Posterior cingulate gyrus (tissue), 11 donors: ENCODE measurements at regions of chr2 and their contacts with region 1.

Region 1: DNA sequence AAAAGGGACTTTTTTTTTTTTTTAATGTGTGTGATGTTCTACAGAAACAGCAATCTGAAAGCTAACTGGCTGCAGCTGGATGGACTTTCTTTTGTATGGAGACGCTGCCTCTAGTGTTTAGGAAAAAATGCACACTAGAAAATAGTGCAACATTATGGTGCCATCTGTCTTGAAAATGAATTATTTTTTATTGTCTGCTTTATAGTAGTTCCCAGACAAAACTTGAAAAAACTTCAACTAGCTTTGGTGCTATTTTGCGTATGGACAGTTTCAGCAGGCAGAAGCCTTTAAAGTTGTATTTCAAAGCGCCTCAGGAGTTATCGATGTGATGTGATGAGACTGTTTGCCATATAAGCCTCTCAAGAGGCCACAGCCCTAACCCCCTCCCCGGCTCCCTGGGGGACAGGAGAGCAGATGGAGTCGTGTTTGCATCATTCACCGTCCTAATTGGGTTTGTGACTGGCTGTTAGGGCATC is 86.9 kb downstream of the LTBP1 start:
- DNase-seq: peak in 1 of 10 donors; percentile 14

Region 2: GRCh38 chr2:32772638-32773447 is 260.8 kb before region 1 on chr2:
- intact Hi-C with region 1: loop called (anchors 1 kb)
- DNase-seq: peak in 1 of 10 donors; percentile 13

Region 3: GRCh38 chr2:33267756-33268155 is 234.1 kb after region 1 on chr2:
- intact Hi-C with region 1: loop called (anchors 10 kb)
- DNase-seq: no peak

Region 4: GRCh38 chr2:33441235-33441810 is 407.7 kb after region 1 on chr2:
- intact Hi-C with region 1: loop called (anchors 2 kb)
- DNase-seq: peak in 9 of 10 donors; percentile 21 to 93 (median 68)